WTC11 (cell line): ENCODE measurements at regions of chr1 and their contacts with region 1.

Region 1: DNA sequence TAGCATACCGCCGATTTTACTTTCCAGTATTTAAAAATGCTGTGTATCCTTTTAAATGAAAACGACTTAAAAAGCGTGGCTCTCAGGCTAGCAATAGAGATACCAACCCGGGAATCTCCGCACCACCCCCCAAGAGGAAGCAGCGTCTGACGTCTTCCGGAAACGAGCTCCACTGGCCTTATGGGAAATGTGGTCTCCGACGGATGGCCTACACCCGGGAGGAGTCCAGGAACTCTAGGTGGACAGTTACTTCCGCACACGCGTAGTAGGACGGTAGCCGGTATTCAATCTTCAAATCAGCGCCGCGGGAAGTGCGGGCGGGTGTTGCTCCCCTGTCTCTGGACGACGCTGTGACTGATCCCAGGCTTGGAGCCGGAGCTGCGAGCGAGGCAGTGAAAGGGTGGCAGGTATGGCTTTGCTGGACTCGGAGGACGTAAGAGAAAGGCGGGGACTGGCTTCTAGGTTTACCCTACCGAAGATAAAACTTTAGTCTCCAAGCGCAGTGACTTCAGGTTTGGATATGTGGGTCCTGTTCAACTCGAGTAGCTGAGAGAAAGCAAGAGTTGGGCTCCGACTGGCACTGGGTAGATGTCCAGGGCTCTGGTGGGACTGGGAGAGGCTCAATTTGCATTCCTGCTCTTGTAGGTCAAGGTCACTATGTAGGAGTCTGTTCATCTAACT is at the start of gene ZNF684:
- DNase-seq: peak; percentile 80
- ATAC-seq: peak; percentile 99
- H3K4me3 Mint-ChIP-seq: peak within 1 kb of the TSS; percentile 97
- H3K27ac Mint-ChIP-seq: peak within 1 kb of the TSS; percentile 94
- H3K4me1 Mint-ChIP-seq: peaks cover 12% of the 10 kb centered on the region
- H3K27me3 Mint-ChIP-seq: peaks cover 10% of the 10 kb centered on the region
- CTCF ChIP-seq: no peak
- total RNA-seq, gene ZNF684: 5.0 to 9.8 TPM (median 7.7 TPM) in 3 replicates

Region 2: GRCh38 chr1:40363721-40364120 is 167.8 kb before region 1 on chr1:
- CTCF ChIA-PET with region 1: no interaction called
- POLR2A ChIA-PET with region 1: no interaction called
- DNase-seq: peak; percentile 27
- ATAC-seq: peak; percentile 87
- H3K4me3 Mint-ChIP-seq: no peak overlapping the region
- H3K27ac Mint-ChIP-seq: no peak overlapping the region
- H3K4me1 Mint-ChIP-seq: peaks cover 3% of the 10 kb centered on the region; the same call in 1 of the 2 replicates
- H3K27me3 Mint-ChIP-seq: peaks cover 18% of the 10 kb centered on the region
- CTCF ChIP-seq: no peak

Region 3: DNA sequence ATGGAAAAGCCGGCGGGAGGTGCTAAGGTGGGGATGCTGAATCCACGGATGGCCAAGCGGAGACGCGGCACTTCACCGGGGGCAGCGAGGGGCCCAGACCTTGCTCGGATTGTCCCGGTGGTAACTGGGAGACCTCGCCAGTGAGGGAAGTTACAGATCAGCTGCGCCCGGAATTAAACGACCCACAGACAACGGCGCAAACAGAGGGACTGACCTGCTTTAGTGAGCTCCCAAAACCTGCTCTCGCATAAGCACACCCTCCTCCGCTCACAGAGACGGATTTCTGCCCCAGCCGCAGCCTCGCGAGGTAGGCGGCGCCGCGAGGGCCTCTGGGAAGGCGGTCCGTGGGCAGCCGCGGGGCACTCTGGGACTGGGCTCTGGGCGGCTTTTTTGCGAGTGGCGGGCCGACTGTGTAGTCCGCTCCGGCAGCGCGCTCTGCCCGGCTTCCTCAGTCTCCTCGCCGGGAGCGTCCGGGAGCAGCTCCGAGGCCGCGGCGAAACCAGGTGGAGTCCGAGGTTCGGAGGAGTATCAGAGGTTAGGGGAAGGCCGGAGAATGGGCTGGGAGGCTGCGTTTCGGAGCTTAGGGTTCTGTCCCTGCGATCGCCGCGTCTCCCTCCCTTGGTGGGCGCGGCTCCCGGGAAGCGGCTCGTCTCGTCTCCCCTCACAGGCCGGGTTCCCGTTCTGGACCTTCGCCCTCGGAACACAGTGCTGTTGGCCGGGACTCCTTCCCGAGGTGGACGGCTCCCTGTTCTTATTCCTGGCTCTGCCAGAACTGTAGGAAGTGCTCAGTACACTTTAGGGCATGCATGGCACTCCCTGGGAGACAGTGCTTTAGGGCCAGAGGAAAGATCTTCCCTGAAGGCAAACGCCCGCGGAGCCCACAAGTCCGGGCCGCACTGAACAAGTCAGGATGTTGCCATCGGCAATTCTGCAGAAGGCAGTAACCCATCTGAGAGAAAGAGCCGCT is 22.9 kb before region 1 on chr1 and contains the start of gene EXO5:
- CTCF ChIA-PET with region 1: interaction called, 12 read pairs
- POLR2A ChIA-PET with region 1: interaction called, 4 read pairs
- DNase-seq: peak; percentile 55
- ATAC-seq: peak; percentile 95
- H3K4me3 Mint-ChIP-seq: peak within 1 kb of the TSS; percentile 78
- H3K27ac Mint-ChIP-seq: no peak within 1 kb of the TSS
- H3K4me1 Mint-ChIP-seq: peaks cover 6% of the 10 kb centered on the region
- H3K27me3 Mint-ChIP-seq: peaks cover 15% of the 10 kb centered on the region
- CTCF ChIP-seq: no peak
- total RNA-seq, gene EXO5: 5.5 to 9.8 TPM (median 8.7 TPM) in 3 replicates

Region 4: DNA sequence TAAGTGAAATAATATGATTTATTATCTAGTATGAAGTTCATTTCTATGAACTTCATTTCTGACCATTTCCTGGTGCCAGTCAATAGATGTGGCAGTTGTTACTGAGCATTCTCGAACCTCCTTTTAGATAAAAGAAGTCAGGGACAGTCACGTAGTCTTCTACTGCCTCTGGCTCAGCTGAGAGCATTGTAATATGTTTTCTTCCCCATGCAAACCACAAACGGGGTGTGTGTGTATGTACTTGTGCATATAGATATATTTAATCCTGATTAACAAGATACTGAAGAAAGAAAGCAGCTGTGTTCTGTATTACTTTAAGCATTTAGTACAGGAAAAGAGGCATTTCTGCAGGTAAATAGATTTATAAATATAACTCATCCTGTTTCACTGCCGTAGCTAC is 21.5 kb after region 1 on chr1:
- CTCF ChIA-PET with region 1: interaction called, 15 read pairs
- POLR2A ChIA-PET with region 1: no interaction called
- DNase-seq: no peak
- ATAC-seq: no peak
- H3K4me3 Mint-ChIP-seq: no peak overlapping the region
- H3K27ac Mint-ChIP-seq: no peak overlapping the region
- H3K4me1 Mint-ChIP-seq: no peaks in the 10 kb centered on the region
- H3K27me3 Mint-ChIP-seq: no peaks in the 10 kb centered on the region
- CTCF ChIP-seq: no peak